Heart right ventricle (tissue), 16 donors: ENCODE measurements at regions of chr1 and their contacts with region 1.

Region 1: GRCh38 chr1:159924981-159925712 is at the start of gene TAGLN2:
- DNase-seq: peak; percentile 93 to 94
- ATAC-seq: peak; percentile 71 to 88 (median 80)
- H3K4me3 ChIP-seq: peak within 1 kb of the TSS; percentile 67 to 97 (median 83)
- H3K27ac ChIP-seq: peak within 1 kb of the TSS; percentile 94 to 100 (median 98)
- H3K4me1 ChIP-seq: peaks cover 7 to 48% (median 39%) of the 10 kb centered on the region in 9 donors
- H3K27me3 ChIP-seq: no peaks in the 10 kb centered on the region
- CTCF ChIP-seq: no peak
- total RNA-seq, gene TAGLN2: 65.9 to 228 (median 92.5) TPM

Region 2: GRCh38 chr1:159854693-159855192 is 70.4 kb before region 1 on chr1:
- intact Hi-C with region 1: loop called in 6 of 10 experiments (anchors 5 to 10 kb)
- DNase-seq: peak; percentile 88 to 91
- ATAC-seq: peak; percentile 95 to 99 (median 96)
- H3K4me3 ChIP-seq: peak overlapping the region; percentile 63 to 96 (median 76)
- H3K27ac ChIP-seq: peak overlapping the region; percentile 93 to 99 (median 98)
- H3K4me1 ChIP-seq: peaks cover 0 to 32% (median 19%) of the 10 kb centered on the region in 9 donors
- H3K27me3 ChIP-seq: no peaks in the 10 kb centered on the region
- CTCF ChIP-seq: peak in 3 of 9 donors; percentile 26 to 44 (median 26)